Sciatic nerve (tissue), 2 donors: ENCODE measurements at regions of chr14 and their contacts with region 1.

Region 1: DNA sequence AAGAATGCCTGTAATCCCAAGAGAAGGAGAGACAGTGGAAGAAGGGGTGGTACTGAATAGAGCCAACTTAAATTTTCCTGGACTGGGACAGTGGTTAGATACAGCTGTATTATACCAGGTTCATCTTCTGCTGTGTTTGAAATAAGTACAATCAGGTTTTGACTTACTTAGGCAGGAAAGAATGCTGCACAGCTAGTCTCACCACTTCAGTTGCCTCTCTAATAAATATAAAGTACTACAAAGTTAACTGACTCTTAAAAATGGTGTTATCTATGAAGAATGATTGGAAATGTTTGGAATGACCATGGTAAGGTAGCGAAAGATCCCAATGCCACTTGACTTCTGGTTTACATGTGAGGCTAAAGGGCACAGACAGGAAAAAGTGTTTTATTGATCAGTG is 652.1 kb downstream of the NOVA1 start:
- DNase-seq: no peak
- ATAC-seq: no peak

Region 2: GRCh38 chr14:27690962-27691361 is 1745.2 kb after region 1 on chr14:
- intact Hi-C with region 1: loop called (anchors 5 kb)
- DNase-seq: no peak
- ATAC-seq: no peak